ENCODE measurements at regions of chr15 and their contacts with region 1.

Region 1: GRCh38 chr15:83192742-83193141 is 14.9 kb downstream of the HDGFL3 start:
- DNase-seq: no peak
- H3K4me3 ChIP-seq: no peak overlapping the region
- H3K27ac ChIP-seq: no peak overlapping the region
- H3K4me1 ChIP-seq: no peaks in the 10 kb centered on the region
- H3K27me3 ChIP-seq: no peaks in the 10 kb centered on the region
- CTCF ChIP-seq: no peak

Region 2: DNA sequence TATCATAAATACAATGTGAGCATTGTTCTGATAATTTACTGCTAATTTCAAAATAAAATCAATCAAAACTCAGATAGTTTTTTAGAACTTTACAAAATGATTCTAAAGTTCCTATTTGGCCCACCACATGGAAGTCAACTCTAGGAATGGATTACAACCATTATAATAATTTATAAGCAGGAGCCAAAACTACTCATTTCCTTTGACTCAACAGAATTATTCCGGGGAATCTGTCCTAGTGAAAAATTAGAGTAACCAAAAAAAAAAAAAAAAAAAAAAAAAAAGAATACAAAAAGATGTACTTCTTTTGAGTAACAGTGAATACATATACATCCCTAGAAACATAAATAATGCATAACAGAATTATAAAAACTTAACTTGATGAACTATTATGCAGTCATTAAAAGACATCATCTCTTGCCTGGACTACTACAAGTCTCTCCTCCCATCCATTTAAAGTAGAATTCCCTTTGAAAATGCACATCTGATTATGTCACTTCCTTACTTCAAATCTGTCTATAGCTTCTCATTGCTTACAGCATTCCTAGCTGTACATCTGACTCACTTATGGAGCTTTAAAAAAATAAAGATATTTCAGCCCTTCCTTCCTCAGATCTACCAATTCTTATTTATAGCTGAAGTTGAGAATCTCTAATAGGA is 28.5 kb before region 1 on chr15:
- CTCF ChIA-PET with region 1: interaction called, 15 read pairs
- POLR2A ChIA-PET with region 1: no interaction called
- intact Hi-C with region 1: no loop called
- DNase-seq: no peak
- H3K4me3 ChIP-seq: no peak overlapping the region
- H3K27ac ChIP-seq: no peak overlapping the region
- H3K4me1 ChIP-seq: 0 out of 2 replicates have a peak, but pooled peaks cover 5% of the 10 kb centered on the region
- H3K27me3 ChIP-seq: no peaks in the 10 kb centered on the region
- CTCF ChIP-seq: no peak

Measured in PC-9 (cell line).